HCT116 (cell line): ENCODE measurements at regions of chr2 and their contacts with region 1.

Region 1: GRCh38 chr2:219160186-219161017 is at the start of gene NHEJ1:
- DNase-seq: peak; percentile 88
- ATAC-seq: peak; percentile 94
- H3K4me3 ChIP-seq: peak within 1 kb of the TSS; percentile 67 to 69
- H3K27ac ChIP-seq: peak within 1 kb of the TSS; percentile 82
- H3K4me1 ChIP-seq: peaks cover 5 to 16% of the 10 kb centered on the region in 2 experiments; a peak in 3 of 4 replicates
- H3K27me3 ChIP-seq: no peaks in the 10 kb centered on the region
- CTCF ChIP-seq: peak; percentile 94 to 99 (median 95)
- POLR2A ChIP-seq: peak; percentile 86
- RAD21 ChIP-seq: peak; percentile 95
- total RNA-seq, gene NHEJ1: 16.4 TPM

Region 2: GRCh38 chr2:218618102-218618860 is 542.1 kb before region 1 on chr2:
- CTCF ChIA-PET with region 1: no interaction called
- POLR2A ChIA-PET with region 1: no interaction called
- RAD21 ChIA-PET with region 1: no interaction called
- intact Hi-C with region 1: no loop called
- DNase-seq: peak; percentile 7
- ATAC-seq: peak; percentile 73
- H3K4me3 ChIP-seq: no peak overlapping the region
- H3K27ac ChIP-seq: no peak overlapping the region
- H3K4me1 ChIP-seq: peaks cover 0 to 4% of the 10 kb centered on the region in 2 experiments; a peak in 2 of 4 replicates
- H3K27me3 ChIP-seq: no peaks in the 10 kb centered on the region
- CTCF ChIP-seq: peak in 2 of 3 experiments; percentile 7 to 18; a peak in 1 of 6 replicates
- POLR2A ChIP-seq: no peak
- RAD21 ChIP-seq: peak; percentile 52; the same call in 1 of the 2 replicates

Region 3: DNA sequence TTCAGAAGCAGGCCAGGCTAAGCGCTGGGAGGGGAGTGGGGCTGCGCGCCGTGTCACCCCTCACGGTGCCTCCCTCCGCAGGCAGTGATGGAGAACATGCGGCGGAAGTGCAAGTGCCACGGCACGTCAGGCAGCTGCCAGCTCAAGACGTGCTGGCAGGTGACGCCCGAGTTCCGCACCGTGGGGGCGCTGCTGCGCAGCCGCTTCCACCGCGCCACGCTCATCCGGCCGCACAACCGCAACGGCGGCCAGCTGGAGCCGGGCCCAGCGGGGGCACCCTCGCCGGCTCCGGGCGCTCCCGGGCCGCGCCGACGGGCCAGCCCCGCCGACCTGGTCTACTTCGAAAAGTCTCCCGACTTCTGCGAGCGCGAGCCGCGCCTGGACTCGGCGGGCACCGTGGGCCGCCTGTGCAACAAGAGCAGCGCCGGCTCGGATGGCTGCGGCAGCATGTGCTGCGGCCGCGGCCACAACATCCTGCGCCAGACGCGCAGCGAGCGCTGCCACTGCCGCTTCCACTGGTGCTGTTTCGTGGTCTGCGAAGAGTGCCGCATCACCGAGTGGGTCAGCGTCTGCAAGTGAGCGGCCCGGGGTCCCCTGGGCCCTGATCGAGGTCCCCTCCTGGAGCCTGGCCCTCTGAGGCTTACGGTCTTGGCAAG is 267.6 kb before region 1 on chr2:
- CTCF ChIA-PET with region 1: no interaction called
- POLR2A ChIA-PET with region 1: no interaction called
- RAD21 ChIA-PET with region 1: no interaction called
- intact Hi-C with region 1: no loop called
- DNase-seq: peak; percentile 56
- ATAC-seq: peak; percentile 66
- H3K4me3 ChIP-seq: peak overlapping the region; percentile 69 to 76
- H3K27ac ChIP-seq: peak overlapping the region; percentile 92
- H3K4me1 ChIP-seq: peaks cover 47 to 61% of the 10 kb centered on the region in 2 experiments
- H3K27me3 ChIP-seq: no peaks in the 10 kb centered on the region
- CTCF ChIP-seq: peak in 2 of 3 experiments; percentile 43 to 48; a peak in 4 of 6 replicates
- POLR2A ChIP-seq: no peak
- RAD21 ChIP-seq: no peak

Region 4: DNA sequence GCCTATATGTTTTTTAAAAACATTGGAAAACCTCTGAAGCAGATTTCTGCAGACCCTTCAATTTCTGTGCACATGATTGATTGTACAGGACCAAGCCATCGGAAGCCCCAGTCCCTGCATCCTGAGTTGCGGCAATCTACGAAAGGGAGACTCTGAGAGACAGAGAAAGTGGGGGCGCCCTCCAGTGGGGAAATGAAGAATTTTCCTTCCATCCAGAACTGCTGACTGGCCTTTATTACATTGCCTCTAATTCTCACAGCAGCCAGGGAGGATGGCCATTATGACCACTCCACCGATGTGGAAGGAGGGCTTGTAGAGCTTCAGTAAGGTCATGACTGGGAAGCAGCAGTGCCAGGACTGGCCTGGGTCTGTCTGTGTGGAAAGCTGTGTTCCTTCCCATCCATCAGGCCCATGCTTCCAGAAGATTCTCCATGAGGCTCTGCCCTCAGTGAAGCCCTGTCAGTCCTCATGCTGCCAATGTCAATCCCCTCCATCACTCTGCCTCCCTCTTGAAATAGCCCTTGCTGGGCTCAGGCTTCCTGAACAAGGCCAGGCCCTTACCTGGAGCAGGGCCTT is 192.1 kb after region 1 on chr2:
- CTCF ChIA-PET with region 1: no interaction called
- POLR2A ChIA-PET with region 1: no interaction called
- RAD21 ChIA-PET with region 1: no interaction called
- intact Hi-C with region 1: loop called (anchors 2 kb)
- DNase-seq: peak; percentile 53
- ATAC-seq: peak; percentile 96
- H3K4me3 ChIP-seq: no peak overlapping the region
- H3K27ac ChIP-seq: no peak overlapping the region
- H3K4me1 ChIP-seq: no peaks in the 10 kb centered on the region
- H3K27me3 ChIP-seq: peaks cover 3% of the 10 kb centered on the region; the same call in 1 of the 2 replicates
- CTCF ChIP-seq: peak; percentile 74 to 94 (median 87)
- POLR2A ChIP-seq: no peak
- RAD21 ChIP-seq: peak; percentile 84